HEK293 (cell line): ENCODE measurements at regions of chr17 and their contacts with region 1.

Region 1: GRCh38 chr17:27741361-27741861 is 58.9 kb downstream of the NOS2 start:
- H3K4me3 ChIP-seq: no peak overlapping the region
- H3K27ac ChIP-seq: no peak overlapping the region
- H3K4me1 ChIP-seq: no peaks in the 10 kb centered on the region
- CTCF ChIP-seq: no peak

Region 2: DNA sequence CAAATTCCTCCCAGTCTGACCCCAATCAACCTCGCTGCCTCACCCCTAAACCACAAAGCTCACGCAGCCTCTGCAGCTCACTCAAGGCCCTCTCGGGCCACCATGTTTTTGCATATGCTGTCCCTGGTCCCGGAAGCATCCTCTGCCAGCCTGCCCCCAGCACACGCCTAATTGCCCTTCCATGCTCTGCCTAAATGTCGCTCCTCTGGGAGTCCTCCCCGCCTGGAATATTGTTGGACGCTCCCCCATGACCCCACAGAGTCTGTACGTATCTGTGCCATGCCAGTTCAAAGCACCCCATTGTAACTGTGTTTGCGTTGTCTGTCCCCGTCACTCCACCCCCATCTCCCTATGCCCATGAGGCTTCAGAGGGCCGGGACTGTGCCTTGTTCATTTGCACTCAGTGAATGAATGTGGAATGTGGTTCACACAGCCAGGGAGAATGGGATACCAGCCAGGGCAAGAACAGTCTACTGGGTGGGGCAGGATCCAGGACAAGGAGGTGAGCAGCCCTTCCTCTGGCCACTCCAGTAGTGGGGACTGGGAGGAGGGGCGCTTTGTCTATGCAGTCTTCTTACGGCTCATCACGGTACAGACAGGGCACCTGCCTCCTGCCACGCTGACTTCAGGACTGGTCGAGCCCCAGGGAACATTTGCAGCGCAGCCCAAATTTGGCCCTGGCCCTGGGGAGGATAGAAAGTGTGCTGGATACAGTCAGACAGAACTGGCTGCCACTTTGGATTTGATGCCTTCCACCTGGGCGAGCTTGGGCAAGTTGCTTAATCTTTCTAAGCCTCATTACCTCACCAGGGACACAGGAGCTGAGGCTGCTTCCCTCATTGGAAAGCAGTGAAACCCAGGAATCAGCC is 10.4 kb after region 1 on chr17:
- CTCF ChIA-PET with region 1: interaction called, 24 read pairs
- POLR2A ChIA-PET with region 1: no interaction called
- H3K4me3 ChIP-seq: no peak overlapping the region
- H3K27ac ChIP-seq: no peak overlapping the region
- H3K4me1 ChIP-seq: no peaks in the 10 kb centered on the region
- CTCF ChIP-seq: no peak

Region 3: GRCh38 chr17:28204751-28205150 is 463.3 kb after region 1 on chr17:
- CTCF ChIA-PET with region 1: no interaction called
- POLR2A ChIA-PET with region 1: no interaction called
- H3K4me3 ChIP-seq: no peak overlapping the region
- H3K27ac ChIP-seq: no peak overlapping the region
- H3K4me1 ChIP-seq: no peaks in the 10 kb centered on the region
- CTCF ChIP-seq: no peak